GM10248 (cell line): ENCODE measurements at regions of chr5 and their contacts with region 1.

Region 1: GRCh38 chr5:43193894-43194265 is 1.9 kb downstream of the NIM1K start:
- DNase-seq: no peak
- CTCF ChIP-seq: no peak

Region 2: DNA sequence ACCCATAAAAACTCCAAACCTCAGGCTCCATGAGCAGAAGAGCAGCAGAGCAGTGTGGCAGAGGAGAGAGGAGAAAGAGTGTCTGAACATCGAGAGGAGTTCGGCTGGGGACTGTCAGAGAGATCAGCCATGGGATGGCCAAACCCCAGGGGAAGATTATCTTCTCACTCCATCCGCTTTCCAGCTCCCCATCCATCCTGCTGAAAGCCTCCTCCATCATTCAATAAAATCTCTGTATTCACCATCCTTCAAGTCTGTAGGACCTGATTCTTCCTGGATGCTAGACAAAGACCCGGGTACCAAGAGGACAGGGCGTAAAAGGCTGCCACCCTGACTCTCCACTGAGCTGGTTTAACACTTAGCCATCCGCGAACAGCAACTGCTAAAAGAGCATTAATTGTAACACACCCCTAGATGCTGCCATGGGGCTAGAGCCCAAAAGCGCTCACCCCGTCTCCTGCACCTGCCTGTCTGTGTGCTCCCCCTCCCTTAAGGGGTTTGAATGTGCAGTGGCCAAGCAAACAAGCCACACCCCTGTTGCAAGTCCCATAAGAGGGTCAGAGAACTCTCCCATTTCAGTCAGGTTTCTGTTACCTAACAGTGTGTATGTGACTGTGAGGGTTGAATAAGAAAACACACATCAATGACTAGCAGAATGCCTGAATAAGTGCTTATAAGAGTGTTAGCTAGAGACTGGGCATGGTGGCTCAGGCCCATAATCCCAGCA is 368.3 kb before region 1 on chr5:
- CTCF ChIA-PET with region 1: no interaction called
- POLR2A ChIA-PET with region 1: no interaction called
- DNase-seq: no peak
- CTCF ChIP-seq: no peak

Region 3: GRCh38 chr5:42970636-42971559 is 223.0 kb before region 1 on chr5:
- CTCF ChIA-PET with region 1: no interaction called
- POLR2A ChIA-PET with region 1: no interaction called
- DNase-seq: no peak
- CTCF ChIP-seq: no peak

Region 4: DNA sequence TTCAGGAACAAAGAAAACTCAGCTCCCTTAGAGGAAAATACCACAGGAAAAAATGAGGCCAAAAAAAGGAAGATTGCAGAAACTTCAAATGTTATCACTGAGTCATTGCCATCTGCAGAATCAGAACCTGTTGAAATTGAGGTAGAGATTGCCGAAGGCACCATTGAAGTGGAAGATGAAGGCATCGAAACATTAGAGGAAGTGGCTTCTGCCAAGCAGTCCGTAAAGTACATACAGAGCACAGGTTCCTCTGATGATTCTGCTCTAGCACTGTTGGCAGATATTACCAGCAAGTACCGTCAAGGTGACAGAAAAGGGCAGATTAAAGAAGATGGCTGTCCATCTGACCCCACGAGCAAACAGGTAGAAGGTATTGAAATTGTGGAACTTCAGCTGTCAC is 32.6 kb before region 1 on chr5:
- CTCF ChIA-PET with region 1: no interaction called
- POLR2A ChIA-PET with region 1: no interaction called
- DNase-seq: no peak
- CTCF ChIP-seq: no peak

Region 5: DNA sequence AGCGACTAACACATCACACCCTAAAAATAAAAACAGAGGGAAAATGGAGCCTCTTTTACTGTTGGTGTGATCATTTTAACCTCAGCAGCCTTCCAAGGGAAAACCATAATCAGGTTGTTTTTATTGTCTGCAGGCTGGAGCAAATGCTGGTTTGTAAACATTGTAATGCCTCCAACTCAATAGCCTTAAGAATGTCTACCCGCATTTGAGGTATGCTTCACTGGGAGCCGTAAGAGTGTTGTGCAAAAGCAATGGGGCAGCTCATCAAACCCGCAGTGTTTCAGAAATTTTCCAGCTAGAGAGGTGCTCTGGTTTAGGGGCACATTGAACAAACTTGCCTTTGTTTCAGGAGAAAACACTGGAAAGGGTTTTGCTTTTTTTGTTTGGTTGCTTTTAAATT is 15.2 kb after region 1 on chr5:
- CTCF ChIA-PET with region 1: interaction called, 13 read pairs
- POLR2A ChIA-PET with region 1: no interaction called
- DNase-seq: no peak
- CTCF ChIP-seq: no peak

Region 6: DNA sequence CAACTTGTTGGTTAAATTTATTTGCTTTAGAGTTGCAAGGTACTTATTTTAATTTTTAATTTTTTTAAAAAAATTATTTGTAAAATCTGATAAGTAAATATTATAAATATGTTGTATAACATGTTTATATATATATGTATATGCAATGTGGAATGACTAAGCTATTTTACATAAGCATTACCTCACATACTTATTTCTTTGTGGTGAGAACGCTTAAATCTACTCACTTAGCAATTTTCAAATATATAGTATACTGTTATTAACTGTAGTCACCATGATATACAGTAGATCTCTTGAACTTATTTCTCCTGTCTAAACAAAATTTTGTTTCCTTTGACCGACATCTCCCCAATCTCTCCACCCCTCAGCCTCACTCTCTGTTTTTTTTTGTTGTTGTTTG is 556.9 kb after region 1 on chr5:
- CTCF ChIA-PET with region 1: no interaction called
- POLR2A ChIA-PET with region 1: no interaction called
- DNase-seq: no peak
- CTCF ChIP-seq: no peak